Activated naive CD4-positive, alpha-beta T cell treated with anti-CD3 and anti-CD28 coated beads for 36 hours (primary cell): ENCODE measurements at regions of chr12 and their contacts with region 1.

Region 1: GRCh38 chr12:112900299-112901145 is 6.2 kb upstream of the OAS1 start:
- DNase-seq: peak; percentile 65
- H3K4me3 Mint-ChIP-seq: no peak overlapping the region
- H3K27ac Mint-ChIP-seq: no peak overlapping the region
- H3K4me1 Mint-ChIP-seq: peaks cover 18% of the 10 kb centered on the region
- H3K27me3 Mint-ChIP-seq: no peaks in the 10 kb centered on the region

Region 2: GRCh38 chr12:112881602-112882001 is 18.9 kb before region 1 on chr12:
- CTCF ChIA-PET with region 1: no interaction called
- intact Hi-C with region 1: no loop called
- DNase-seq: no peak
- H3K4me3 Mint-ChIP-seq: no peak overlapping the region
- H3K27ac Mint-ChIP-seq: no peak overlapping the region
- H3K4me1 Mint-ChIP-seq: no peaks in the 10 kb centered on the region
- H3K27me3 Mint-ChIP-seq: peaks cover 7% of the 10 kb centered on the region

Region 3: DNA sequence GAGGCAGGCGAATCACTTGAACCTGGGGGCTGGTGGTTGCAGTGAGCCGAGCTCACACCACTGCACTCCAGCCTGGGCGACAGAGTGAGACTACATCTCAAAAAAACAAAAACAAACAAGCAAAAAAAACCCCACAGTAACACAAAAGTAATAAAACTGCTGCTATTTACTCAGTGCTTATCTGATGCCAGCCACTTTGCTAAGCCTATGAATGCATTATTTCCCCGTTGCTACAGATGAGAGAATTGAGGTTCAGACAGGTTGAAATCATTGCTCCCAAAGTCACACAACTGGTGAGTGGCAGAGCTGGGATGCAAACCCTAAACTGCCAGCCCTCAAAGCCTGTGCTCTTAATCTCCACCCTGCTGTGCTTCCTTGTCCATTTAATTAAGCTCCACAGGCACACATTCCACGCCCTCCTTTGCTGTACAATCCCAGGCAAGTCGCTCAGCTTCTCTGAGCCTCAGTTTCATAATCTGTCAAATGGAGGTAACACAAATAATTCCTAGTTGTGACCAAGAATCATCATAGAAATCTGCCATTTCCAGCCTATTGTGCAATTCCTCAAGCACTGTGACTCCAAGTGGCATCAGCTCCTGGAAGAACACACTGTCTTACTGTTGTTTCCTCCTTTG is 32.1 kb after region 1 on chr12:
- CTCF ChIA-PET with region 1: interaction called, 10 read pairs
- intact Hi-C with region 1: no loop called
- DNase-seq: no peak
- H3K4me3 Mint-ChIP-seq: no peak overlapping the region
- H3K27ac Mint-ChIP-seq: no peak overlapping the region
- H3K4me1 Mint-ChIP-seq: peaks cover 9% of the 10 kb centered on the region
- H3K27me3 Mint-ChIP-seq: no peaks in the 10 kb centered on the region

Region 4: DNA sequence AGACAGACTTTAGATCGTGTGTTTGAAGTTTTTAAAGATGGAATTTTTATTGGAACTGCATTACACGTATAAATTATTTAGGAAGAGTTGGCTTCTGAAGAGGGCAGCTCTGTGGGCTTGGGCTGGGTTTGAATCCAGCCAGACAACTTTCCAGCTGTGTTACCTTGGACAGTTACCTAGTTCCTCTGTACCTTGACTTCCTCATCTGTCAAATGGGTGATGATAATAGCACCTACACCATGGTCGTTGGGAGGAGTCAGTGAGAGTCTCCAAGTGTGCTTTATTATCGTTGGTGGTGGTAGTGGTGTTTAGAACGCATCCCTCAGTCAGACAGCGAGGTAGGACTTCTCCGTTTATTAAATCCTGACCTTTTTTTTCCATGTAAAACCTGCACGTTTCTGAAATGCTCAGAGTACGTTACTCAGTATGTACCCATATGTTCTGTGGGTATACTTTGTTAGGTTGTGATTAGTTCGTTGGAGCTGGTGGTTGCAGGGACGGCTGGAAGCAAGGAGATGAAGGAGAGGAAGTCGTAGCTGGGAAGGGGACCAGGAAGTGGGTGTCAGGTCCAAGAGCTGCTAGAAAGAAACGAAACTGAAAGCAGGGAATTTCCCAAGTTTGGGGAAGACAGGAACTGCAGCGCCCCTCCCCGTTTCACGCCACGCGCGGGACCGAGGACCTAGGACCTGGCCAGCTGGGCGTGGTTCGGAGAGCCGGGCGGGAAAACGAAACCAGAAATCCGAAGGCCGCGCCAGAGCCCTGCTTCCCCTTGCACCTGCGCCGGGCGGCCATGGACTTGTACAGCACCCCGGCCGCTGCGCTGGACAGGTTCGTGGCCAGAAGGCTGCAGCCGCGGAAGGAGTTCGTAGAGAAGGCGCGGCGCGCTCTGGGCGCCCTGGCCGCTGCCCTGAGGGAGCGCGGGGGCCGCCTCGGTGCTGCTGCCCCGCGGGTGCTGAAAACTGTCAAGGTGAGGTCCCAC is 37.5 kb after region 1 on chr12 and contains the start of gene OAS3:
- CTCF ChIA-PET with region 1: interaction called, 5 read pairs
- intact Hi-C with region 1: loop called (anchors 1 kb)
- DNase-seq: peak; percentile 61
- H3K4me3 Mint-ChIP-seq: peak within 1 kb of the TSS; percentile 80
- H3K27ac Mint-ChIP-seq: peak within 1 kb of the TSS; percentile 67
- H3K4me1 Mint-ChIP-seq: peaks cover 31% of the 10 kb centered on the region
- H3K27me3 Mint-ChIP-seq: no peaks in the 10 kb centered on the region
- total RNA-seq, gene OAS3: 26.1 to 28.0 TPM

Region 5: DNA sequence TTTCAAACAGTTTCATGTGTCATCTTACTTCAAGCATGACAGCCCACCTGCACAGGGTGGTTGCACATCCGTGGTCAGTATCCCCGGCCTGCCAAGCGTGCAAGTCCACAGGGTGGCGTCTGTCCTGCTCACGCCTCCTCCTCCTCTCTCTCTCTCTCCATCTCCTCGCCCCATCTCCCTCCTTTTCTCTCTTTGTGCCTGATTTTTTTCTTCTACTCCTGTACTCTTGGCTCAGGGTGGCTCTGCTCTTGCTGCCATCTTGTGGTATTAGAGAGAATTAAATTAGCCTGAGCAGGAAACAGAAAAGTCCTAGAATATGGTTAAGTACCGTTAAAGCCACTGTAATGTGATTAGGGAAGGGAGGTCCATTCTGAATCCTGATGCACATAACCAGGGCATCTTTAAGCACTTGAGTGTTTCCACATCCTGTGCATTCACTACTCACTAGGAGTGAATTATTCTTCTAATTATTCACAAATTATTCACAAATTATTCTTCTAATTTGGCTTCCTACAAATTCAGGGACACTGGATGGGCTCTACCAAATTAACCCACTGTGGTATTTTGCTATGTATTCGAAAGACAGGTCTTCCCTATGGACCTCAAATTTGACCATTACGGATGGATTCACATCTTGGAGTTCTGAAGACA is 130.5 kb after region 1 on chr12:
- CTCF ChIA-PET with region 1: interaction called, 15 read pairs
- intact Hi-C with region 1: loop called (anchors 1 kb)
- DNase-seq: peak; percentile 14
- H3K4me3 Mint-ChIP-seq: no peak overlapping the region
- H3K27ac Mint-ChIP-seq: no peak overlapping the region
- H3K4me1 Mint-ChIP-seq: no peaks in the 10 kb centered on the region
- H3K27me3 Mint-ChIP-seq: peaks cover 5% of the 10 kb centered on the region

Region 6: GRCh38 chr12:113098446-113098896 is 197.9 kb after region 1 on chr12:
- CTCF ChIA-PET with region 1: no interaction called
- intact Hi-C with region 1: loop called (anchors 5 kb)
- DNase-seq: peak; percentile 88
- H3K4me3 Mint-ChIP-seq: no peak overlapping the region
- H3K27ac Mint-ChIP-seq: no peak overlapping the region
- H3K4me1 Mint-ChIP-seq: peaks cover 18% of the 10 kb centered on the region
- H3K27me3 Mint-ChIP-seq: no peaks in the 10 kb centered on the region

Region 7: GRCh38 chr12:113174461-113175384 is 274.2 kb after region 1 on chr12:
- CTCF ChIA-PET with region 1: no interaction called
- intact Hi-C with region 1: loop called (anchors 5 kb)
- DNase-seq: peak; percentile 86
- H3K4me3 Mint-ChIP-seq: no peak overlapping the region
- H3K27ac Mint-ChIP-seq: no peak overlapping the region
- H3K4me1 Mint-ChIP-seq: no peaks in the 10 kb centered on the region
- H3K27me3 Mint-ChIP-seq: no peaks in the 10 kb centered on the region